ENCODE measurements at regions of chr1 and their contacts with region 1.

Region 1: GRCh38 chr1:15994590-15995351 is 9.3 kb upstream of the SRARP start:
- DNase-seq: peak in 3 of 5 donors; percentile 41 to 86 (median 42)
- H3K4me3 ChIP-seq: no peak overlapping the region
- H3K27ac ChIP-seq: no peak overlapping the region
- H3K4me1 ChIP-seq: no peaks in the 10 kb centered on the region
- H3K27me3 ChIP-seq: no peaks in the 10 kb centered on the region
- CTCF ChIP-seq: peak; percentile 78

Region 2: GRCh38 chr1:15816674-15817073 is 178.1 kb before region 1 on chr1:
- intact Hi-C with region 1: loop called (anchors 5 kb)
- DNase-seq: no peak
- H3K4me3 ChIP-seq: no peak overlapping the region
- H3K27ac ChIP-seq: no peak overlapping the region
- H3K4me1 ChIP-seq: no peaks in the 10 kb centered on the region
- H3K27me3 ChIP-seq: no peaks in the 10 kb centered on the region
- CTCF ChIP-seq: no peak